ENCODE measurements at regions of chr2 and their contacts with region 1.

Region 1: DNA sequence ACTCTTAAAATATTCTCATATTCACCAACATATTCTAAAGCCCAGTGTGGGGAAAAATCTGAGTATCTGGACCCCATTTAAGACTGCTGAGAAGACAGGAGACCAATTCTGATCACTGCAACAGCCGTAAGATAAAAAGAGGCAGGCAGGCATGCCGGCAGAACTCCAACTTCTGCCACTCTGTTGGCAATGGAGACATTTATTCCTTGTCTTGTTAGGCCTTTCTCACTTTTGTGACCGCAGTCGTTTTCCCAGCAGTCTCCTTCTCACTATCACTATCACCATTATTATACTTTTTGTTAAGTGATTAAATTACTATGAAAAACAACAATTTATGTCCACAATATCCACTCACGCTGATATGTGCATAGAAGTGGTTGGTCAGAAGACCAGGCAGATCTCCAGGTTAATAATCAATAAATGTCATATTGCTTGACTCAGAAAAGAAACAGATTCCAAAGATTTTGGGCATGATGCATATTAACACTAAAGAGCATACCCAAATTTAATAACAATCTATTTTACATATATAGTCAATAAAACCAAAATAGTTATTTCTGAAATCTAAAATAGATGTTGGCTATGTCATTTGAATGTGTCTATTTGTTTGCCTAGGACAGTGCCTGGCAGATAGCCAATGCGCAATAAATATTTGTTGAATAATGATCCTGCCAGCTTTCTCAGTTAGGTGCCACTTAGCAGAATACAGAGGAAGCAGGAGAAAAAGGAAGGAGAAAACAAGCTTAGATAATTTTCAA is 38.2 kb downstream of the SESTD1 start:
- DNase-seq: peak in 8 of 10 donors; percentile 29 to 61 (median 50)
- H3K4me3 ChIP-seq: peak overlapping the region in 15 of 59 donors; percentile 0 to 36 (median 8)
- H3K27ac ChIP-seq: peak overlapping the region in 56 of 59 donors; percentile 0 to 76 (median 58)
- H3K27me3 ChIP-seq: no peaks in the 10 kb centered on the region
- CTCF ChIP-seq: no peak

Region 2: DNA sequence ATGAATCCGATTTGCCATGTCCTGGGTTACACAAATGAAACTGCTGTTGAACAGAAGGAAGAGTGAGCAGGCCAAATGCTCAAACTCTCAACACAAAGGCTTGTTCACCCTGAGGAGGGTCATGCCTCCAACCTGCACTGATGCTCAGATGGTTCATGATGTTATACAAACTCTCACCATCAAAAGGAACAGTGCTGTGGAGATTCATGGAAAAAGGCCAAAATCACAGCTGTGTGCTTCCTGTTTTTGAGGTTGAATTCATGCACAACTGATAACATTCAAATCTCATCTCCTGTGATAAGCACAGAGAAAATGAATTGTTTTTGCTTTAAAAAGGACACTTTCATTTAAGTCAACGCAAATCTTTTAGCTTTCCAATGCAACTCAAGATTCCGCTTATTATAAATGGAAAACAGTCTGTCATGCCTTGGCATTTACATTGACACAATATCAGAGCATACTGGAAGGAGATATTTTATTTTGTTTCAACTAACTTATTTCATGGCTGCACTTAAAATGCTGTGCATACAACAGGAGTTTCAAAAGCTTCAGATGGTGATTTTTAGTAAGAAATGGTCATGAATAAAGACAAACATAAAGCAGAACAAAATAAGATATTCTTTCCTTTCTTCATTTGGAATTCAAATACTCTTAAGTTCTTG is 397.0 kb before region 1 on chr2:
- intact Hi-C with region 1: no loop called
- DNase-seq: no peak
- H3K4me3 ChIP-seq: peak overlapping the region in 5 of 59 donors; percentile 0 to 35 (median 26)
- H3K27ac ChIP-seq: peak overlapping the region in 15 of 59 donors; percentile 3 to 70 (median 21)
- H3K27me3 ChIP-seq: no peaks in the 10 kb centered on the region
- CTCF ChIP-seq: no peak

Region 3: GRCh38 chr2:179264368-179265081 is 38.1 kb after region 1 on chr2 and contains the start of gene SESTD1:
- intact Hi-C with region 1: loop called in 1 of 2 experiments (anchors 5 kb)
- DNase-seq: peak in 9 of 10 donors; percentile 28 to 83 (median 64)
- H3K4me3 ChIP-seq: peak within 1 kb of the TSS; percentile 59 to 93 (median 79)
- H3K27ac ChIP-seq: peak within 1 kb of the TSS; percentile 57 to 95 (median 87)
- H3K27me3 ChIP-seq: no peaks in the 10 kb centered on the region
- CTCF ChIP-seq: peak in 7 of 56 donors; percentile 2 to 25 (median 8)
- total RNA-seq, gene SESTD1: 76.4 to 194 (median 123) TPM

Region 4: DNA sequence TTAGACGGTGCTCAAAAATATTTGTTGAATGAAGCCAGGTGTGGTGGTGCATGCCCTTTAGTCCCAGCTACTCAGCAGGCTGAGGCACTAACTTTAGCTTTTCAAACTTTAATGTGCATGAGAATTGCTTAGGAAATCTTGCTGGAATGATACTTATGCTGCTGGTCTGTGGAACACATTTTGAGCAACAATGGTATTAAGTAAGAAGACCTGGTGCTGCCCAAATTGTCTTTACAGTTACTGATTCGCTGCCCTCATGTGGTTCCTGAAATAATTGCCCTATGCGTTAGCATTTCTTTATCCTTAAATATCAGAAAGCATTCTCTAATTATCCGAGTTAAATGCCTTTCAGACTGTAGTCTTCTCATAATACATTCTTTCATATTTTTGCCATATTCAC is 114.3 kb after region 1 on chr2:
- intact Hi-C with region 1: loop called in 1 of 2 experiments (anchors 10 kb)
- DNase-seq: no peak
- H3K4me3 ChIP-seq: peak overlapping the region in 9 of 59 donors; percentile 1 to 34 (median 27)
- H3K27ac ChIP-seq: no peak overlapping the region
- H3K27me3 ChIP-seq: no peaks in the 10 kb centered on the region
- CTCF ChIP-seq: peak in 48 of 56 donors; percentile 14 to 65 (median 42)

Region 5: DNA sequence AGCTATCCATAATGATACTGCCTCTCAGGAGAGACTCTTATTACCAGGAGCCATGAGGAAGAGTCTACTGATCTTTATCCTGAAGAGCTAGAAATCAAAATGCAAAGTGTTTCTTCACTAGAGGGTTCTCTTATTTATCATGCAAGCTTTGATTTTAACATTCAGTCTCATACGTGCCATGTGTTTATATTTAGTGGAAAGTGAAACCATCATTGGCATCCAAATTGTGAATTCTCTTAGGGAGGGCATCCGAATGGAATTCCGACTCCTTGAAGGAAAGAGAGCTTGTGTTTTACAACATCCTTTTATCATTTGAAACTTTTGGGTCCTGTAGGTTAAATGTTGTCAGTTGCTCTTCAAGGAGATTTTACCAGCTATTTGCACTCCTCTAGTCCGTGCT is 208.6 kb after region 1 on chr2:
- intact Hi-C with region 1: loop called (anchors 10 kb)
- DNase-seq: no peak
- H3K4me3 ChIP-seq: no peak overlapping the region
- H3K27ac ChIP-seq: no peak overlapping the region
- H3K27me3 ChIP-seq: no peaks in the 10 kb centered on the region
- CTCF ChIP-seq: no peak

Region 6: GRCh38 chr2:179440642-179441251 is 214.4 kb after region 1 on chr2:
- intact Hi-C with region 1: loop called (anchors 10 kb)
- DNase-seq: no peak
- H3K4me3 ChIP-seq: no peak overlapping the region
- H3K27ac ChIP-seq: no peak overlapping the region
- H3K27me3 ChIP-seq: no peaks in the 10 kb centered on the region
- CTCF ChIP-seq: peak; percentile 42 to 83 (median 70)

Region 7: GRCh38 chr2:179686718-179687342 is 460.4 kb after region 1 on chr2:
- intact Hi-C with region 1: no loop called
- DNase-seq: no peak
- H3K4me3 ChIP-seq: no peak overlapping the region
- H3K27ac ChIP-seq: no peak overlapping the region
- H3K27me3 ChIP-seq: no peaks in the 10 kb centered on the region
- CTCF ChIP-seq: no peak

Measured in dorsolateral prefrontal cortex (tissue), 120 donors.